Dendritic cell treated with granulocyte-macrophage colony-stimulating factor and Interleukin-4, amounts not matched to agents 40 ng/mL and 50 ng/mL, for 4 days (primary cell): ENCODE measurements at regions of chr1 and their contacts with region 1.

Region 1: GRCh38 chr1:236142253-236143103 is at the start of gene GPR137B:
- H3K4me3 Mint-ChIP-seq: peak within 1 kb of the TSS; percentile 97
- H3K27ac Mint-ChIP-seq: peak within 1 kb of the TSS; percentile 93
- H3K4me1 Mint-ChIP-seq: peaks cover 47% of the 10 kb centered on the region
- H3K27me3 Mint-ChIP-seq: peaks cover 34% of the 10 kb centered on the region

Region 2: DNA sequence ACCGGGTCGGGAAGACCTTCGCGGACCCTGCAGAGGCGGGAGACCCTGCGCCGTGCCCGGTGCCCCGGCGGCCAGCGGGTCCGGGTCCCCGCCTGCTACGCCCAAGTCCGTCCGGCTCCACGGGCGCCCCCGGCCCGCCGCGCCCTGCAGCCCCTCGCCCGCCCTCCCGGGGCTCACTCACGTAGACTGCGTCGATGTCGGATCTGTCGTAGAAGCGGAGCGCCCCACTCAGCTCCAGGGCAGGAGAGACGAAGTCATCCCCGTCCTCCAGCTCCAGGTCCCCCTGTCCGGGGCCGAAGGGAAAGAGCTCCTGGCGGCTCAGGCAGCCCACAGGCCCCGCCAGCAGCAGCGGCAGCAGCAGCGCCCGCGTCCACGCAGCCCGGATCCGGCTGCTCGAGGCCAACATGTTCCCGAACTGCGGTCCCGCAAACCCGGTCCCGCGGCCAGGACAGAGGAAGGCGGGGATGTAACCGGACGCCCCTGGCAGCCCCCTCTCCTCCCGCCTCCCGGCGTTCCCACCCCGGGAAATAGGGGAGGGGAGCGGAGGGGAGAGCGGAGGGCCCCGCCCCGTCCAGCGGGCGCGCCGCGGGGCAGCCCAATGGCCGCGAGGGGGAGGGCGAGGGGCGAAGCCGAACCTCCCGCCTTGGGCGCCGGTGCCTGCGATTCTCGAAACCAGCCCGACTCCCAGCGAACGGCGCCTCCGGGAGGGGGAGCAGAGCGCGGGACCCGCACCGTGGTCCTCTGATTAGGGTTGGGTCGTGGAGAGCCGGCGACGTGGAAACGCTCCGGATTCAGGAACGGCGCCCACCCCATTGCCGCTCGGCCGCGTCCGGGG is 77.6 kb before region 1 on chr1 and contains the start of gene NID1:
- intact Hi-C with region 1: no loop called
- H3K4me3 Mint-ChIP-seq: peak within 1 kb of the TSS; percentile 78
- H3K27ac Mint-ChIP-seq: peak within 1 kb of the TSS; percentile 84
- H3K4me1 Mint-ChIP-seq: peaks cover 31% of the 10 kb centered on the region
- H3K27me3 Mint-ChIP-seq: peaks cover 39% of the 10 kb centered on the region

Region 3: GRCh38 chr1:236206548-236206947 is 64.1 kb after region 1 on chr1:
- intact Hi-C with region 1: loop called (anchors 5 kb)
- H3K4me3 Mint-ChIP-seq: no peak overlapping the region
- H3K27ac Mint-ChIP-seq: peak overlapping the region; percentile 88
- H3K4me1 Mint-ChIP-seq: peaks cover 38% of the 10 kb centered on the region
- H3K27me3 Mint-ChIP-seq: no peaks in the 10 kb centered on the region

Region 4: GRCh38 chr1:236281654-236282424 is 139.4 kb after region 1 on chr1 and contains the start of gene ERO1B:
- intact Hi-C with region 1: loop called (anchors 2 kb)
- H3K4me3 Mint-ChIP-seq: peak within 1 kb of the TSS; percentile 86
- H3K27ac Mint-ChIP-seq: peak within 1 kb of the TSS; percentile 89
- H3K4me1 Mint-ChIP-seq: peaks cover 41% of the 10 kb centered on the region
- H3K27me3 Mint-ChIP-seq: peaks cover 6% of the 10 kb centered on the region